ENCODE measurements at regions of chr1 and their contacts with region 1.

Region 1: GRCh38 chr1:112501810-112502641 is 6.7 kb upstream of the WNT2B start:
- DNase-seq: peak in 8 of 9 donors; percentile 28 to 66 (median 38)
- ATAC-seq: peak; percentile 78
- H3K4me3 ChIP-seq: peak overlapping the region; percentile 54
- H3K4me3 Mint-ChIP-seq: peak overlapping the region; percentile 43 to 81 (median 70)
- H3K27ac ChIP-seq: no peak overlapping the region
- H3K27ac Mint-ChIP-seq: no peak overlapping the region
- H3K4me1 ChIP-seq: no peaks in the 10 kb centered on the region
- H3K4me1 Mint-ChIP-seq: peaks cover under 1 to 8% (median 3%) of the 10 kb centered on the region in 7 donors
- H3K27me3 ChIP-seq: peaks cover 8 to 9% of the 10 kb centered on the region in 2 donors
- H3K27me3 Mint-ChIP-seq: peaks cover 66 to 74% (median 68%) of the 10 kb centered on the region in 5 donors

Region 2: GRCh38 chr1:112614460-112615065 is 112.5 kb after region 1 on chr1:
- CTCF ChIA-PET with region 1: interaction called, 6 read pairs
- POLR2A ChIA-PET with region 1: no interaction called
- intact Hi-C with region 1: loop called (anchors 1 kb)
- DNase-seq: peak in 5 of 9 donors; percentile 9 to 46 (median 33)
- ATAC-seq: no peak
- H3K4me3 ChIP-seq: no peak overlapping the region
- H3K4me3 Mint-ChIP-seq: peak overlapping the region in 1 of 10 donors; percentile 30
- H3K27ac ChIP-seq: no peak overlapping the region
- H3K27ac Mint-ChIP-seq: peak overlapping the region in 4 of 9 donors; percentile 49 to 87 (median 68)
- H3K4me1 ChIP-seq: peaks cover 8 to 11% of the 10 kb centered on the region in 2 donors
- H3K4me1 Mint-ChIP-seq: peaks cover 10 to 35% (median 14%) of the 10 kb centered on the region in 7 donors
- H3K27me3 ChIP-seq: no peaks in the 10 kb centered on the region
- H3K27me3 Mint-ChIP-seq: peaks cover 0 to 1% (median 0%) of the 10 kb centered on the region in 5 donors

Region 3: DNA sequence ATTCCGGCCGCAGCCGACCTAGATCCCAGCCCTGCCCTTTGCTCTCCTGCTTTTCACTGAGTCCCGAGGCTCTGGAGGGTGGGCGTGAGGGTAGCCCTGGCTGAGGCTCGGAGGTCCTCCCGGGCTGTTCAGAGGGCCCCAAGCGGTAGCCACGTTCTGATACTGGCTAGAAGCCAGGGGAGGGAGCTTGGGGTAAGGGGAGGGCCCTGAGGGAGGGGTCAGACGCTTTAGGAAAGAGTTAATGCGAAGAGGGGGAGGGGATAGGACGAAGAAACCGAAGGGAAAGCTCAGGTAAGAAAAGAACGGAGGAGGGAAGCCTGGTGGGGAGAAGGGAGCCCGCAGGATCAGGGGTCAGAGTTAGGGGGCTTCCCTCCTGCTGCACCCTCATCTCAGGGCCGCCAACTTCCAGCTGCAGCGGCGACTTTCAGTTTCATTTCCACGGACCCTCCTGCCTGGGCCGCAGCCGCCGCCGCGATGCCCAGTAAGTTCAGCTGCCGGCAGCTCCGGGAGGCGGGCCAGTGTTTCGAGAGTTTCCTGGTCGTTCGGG is 172.5 kb after region 1 on chr1 and contains the start of gene MOV10:
- CTCF ChIA-PET with region 1: interaction called, 4 read pairs
- POLR2A ChIA-PET with region 1: interaction called, 3 read pairs
- intact Hi-C with region 1: loop called (anchors 10 kb)
- DNase-seq: peak; percentile 38 to 62 (median 59)
- ATAC-seq: peak; percentile 73
- H3K4me3 ChIP-seq: peak within 1 kb of the TSS; percentile 92
- H3K4me3 Mint-ChIP-seq: peak within 1 kb of the TSS; percentile 94 to 99 (median 97)
- H3K27ac ChIP-seq: peak within 1 kb of the TSS; percentile 88
- H3K27ac Mint-ChIP-seq: peak within 1 kb of the TSS; percentile 90 to 98 (median 95)
- H3K4me1 ChIP-seq: peaks cover 17 to 19% of the 10 kb centered on the region in 2 donors
- H3K4me1 Mint-ChIP-seq: peaks cover 37 to 62% (median 58%) of the 10 kb centered on the region in 7 donors
- H3K27me3 ChIP-seq: no peaks in the 10 kb centered on the region
- H3K27me3 Mint-ChIP-seq: no peaks in the 10 kb centered on the region
- total RNA-seq, gene MOV10: 85.5 to 126 (median 90.1) TPM

Region 4: GRCh38 chr1:112706908-112707663 is 205.1 kb after region 1 on chr1 and contains the start of gene RHOC:
- CTCF ChIA-PET with region 1: interaction called, 15 read pairs
- POLR2A ChIA-PET with region 1: interaction called, 5 read pairs
- intact Hi-C with region 1: loop called (anchors 1 kb)
- DNase-seq: peak in 6 of 9 donors; percentile 27 to 79 (median 44)
- ATAC-seq: peak; percentile 75
- H3K4me3 ChIP-seq: peak within 1 kb of the TSS; percentile 41
- H3K4me3 Mint-ChIP-seq: peak within 1 kb of the TSS; percentile 74 to 90 (median 83)
- H3K27ac ChIP-seq: no peak within 1 kb of the TSS
- H3K27ac Mint-ChIP-seq: peak within 1 kb of the TSS; percentile 13 to 87 (median 73)
- H3K4me1 ChIP-seq: peaks cover 22% of the 10 kb centered on the region in 2 donors
- H3K4me1 Mint-ChIP-seq: peaks cover 15 to 52% (median 45%) of the 10 kb centered on the region in 7 donors
- H3K27me3 ChIP-seq: no peaks in the 10 kb centered on the region
- H3K27me3 Mint-ChIP-seq: peaks cover 0 to 27% (median 0%) of the 10 kb centered on the region in 5 donors
- total RNA-seq, gene RHOC: 0.57 to 89.1 (median 18.7) TPM

Measured in naive thymus-derived CD4-positive, alpha-beta T cell (primary cell).